HEK293 (cell line): ENCODE measurements at regions of chr12 and their contacts with region 1.

Region 1: GRCh38 chr12:104381731-104382480 is 74.8 kb upstream of the CHST11 start:
- H3K4me3 ChIP-seq: no peak overlapping the region
- H3K27ac ChIP-seq: no peak overlapping the region
- H3K4me1 ChIP-seq: no peaks in the 10 kb centered on the region
- CTCF ChIP-seq: peak; percentile 80

Region 2: GRCh38 chr12:104201238-104202001 is 180.5 kb before region 1 on chr12:
- CTCF ChIA-PET with region 1: interaction called, 12 read pairs
- POLR2A ChIA-PET with region 1: no interaction called
- H3K4me3 ChIP-seq: no peak overlapping the region
- H3K27ac ChIP-seq: no peak overlapping the region
- H3K4me1 ChIP-seq: no peaks in the 10 kb centered on the region
- CTCF ChIP-seq: peak; percentile 74

Region 3: DNA sequence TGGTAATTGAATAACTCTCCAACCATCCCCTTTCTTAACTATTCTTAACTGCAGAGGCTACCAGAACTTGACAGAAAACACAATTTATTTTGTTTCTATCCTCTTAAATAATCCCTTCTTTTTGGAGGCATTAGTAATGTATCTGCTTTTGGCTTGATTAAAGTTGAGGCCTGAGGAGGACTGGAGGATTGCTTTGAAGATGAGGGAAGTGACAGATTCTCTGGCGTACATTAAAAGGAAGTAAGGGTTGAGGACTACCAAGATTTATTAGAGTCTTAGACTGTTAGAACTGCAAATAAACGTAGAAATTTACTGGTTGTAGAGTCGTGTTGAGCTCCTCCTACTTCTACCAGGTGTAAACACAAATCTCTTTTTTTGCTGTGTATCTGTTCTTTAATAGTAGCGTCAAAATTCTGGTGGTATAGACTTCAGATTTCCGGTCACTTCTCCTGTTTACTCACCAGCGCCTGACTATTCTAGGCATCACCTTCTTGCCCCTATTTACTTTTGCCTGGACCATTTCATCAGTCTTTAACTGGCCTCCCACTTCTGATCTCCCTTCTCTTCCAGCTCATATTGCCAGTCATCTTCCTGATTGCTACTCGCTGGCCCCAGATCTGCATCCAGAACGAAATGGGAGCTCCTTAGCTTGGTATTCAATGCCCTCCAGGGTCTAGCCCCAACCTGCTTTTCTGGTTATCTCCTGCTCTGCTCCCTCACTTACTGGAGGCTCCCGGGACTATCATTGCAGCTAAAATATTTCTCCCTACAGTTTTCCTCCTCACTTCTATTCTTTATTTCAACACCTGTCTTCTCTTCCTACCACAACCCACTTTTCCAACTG is 86.8 kb before region 1 on chr12:
- CTCF ChIA-PET with region 1: no interaction called
- POLR2A ChIA-PET with region 1: no interaction called
- H3K4me3 ChIP-seq: no peak overlapping the region
- H3K27ac ChIP-seq: no peak overlapping the region
- H3K4me1 ChIP-seq: no peaks in the 10 kb centered on the region
- CTCF ChIP-seq: no peak

Region 4: DNA sequence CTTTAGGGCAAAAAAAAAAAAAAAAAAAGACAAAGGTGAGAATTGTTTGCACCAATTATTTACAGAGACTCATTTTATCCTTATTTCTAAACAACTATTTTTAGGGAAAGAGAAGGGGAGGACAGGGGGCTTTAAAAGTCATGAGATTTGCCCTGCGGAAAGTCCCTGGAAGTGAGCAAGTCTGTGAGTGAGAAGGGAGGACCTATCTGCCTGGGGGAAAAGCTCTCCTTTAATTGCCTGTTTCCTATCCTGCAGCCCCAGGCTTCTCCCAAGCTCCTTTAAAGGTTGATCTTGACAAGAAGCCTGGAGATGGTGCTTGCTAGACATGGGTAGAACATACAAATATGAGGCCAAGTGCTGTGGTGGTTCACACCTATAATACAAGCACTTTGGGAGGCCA is 66.5 kb after region 1 on chr12:
- CTCF ChIA-PET with region 1: interaction called, 11 read pairs
- POLR2A ChIA-PET with region 1: no interaction called
- H3K4me3 ChIP-seq: no peak overlapping the region
- H3K27ac ChIP-seq: no peak overlapping the region
- H3K4me1 ChIP-seq: no peaks in the 10 kb centered on the region
- CTCF ChIP-seq: no peak

Region 5: DNA sequence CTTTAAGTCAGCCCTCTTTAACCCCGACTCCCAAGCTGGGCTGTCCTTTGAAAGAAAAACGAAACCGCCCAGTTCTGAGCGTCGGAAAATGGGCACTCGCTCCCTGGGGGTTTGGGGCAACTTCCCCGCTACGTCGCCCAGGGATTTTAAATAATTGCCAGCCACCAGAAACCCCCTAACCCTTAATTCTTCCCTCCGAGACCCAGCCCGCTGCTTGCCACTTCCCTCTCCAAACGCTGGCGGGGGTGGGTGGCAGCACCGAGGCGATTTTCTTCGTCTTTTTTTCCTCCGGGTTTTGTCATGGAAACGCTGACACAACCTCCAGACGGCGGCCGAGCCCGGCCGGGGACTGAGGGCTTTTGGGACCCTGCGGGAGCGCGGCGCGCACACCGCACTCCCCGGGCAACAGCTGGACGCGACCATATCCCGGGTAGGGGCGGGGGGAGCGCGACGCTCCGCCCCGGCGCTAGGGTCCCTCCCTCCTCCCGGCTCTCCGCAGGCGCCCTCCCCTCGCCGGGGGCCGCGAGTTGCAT is 74.6 kb after region 1 on chr12 and contains the start of gene CHST11:
- CTCF ChIA-PET with region 1: interaction called, 33 read pairs
- POLR2A ChIA-PET with region 1: interaction called, 7 read pairs
- H3K4me3 ChIP-seq: peak within 1 kb of the TSS; percentile 83
- H3K27ac ChIP-seq: peak within 1 kb of the TSS; percentile 85
- H3K4me1 ChIP-seq: peaks cover 5% of the 10 kb centered on the region; the same call in 1 of the 2 replicates
- CTCF ChIP-seq: peak; percentile 74

Region 6: GRCh38 chr12:104870797-104871196 is 488.9 kb after region 1 on chr12:
- CTCF ChIA-PET with region 1: interaction called, 11 read pairs
- POLR2A ChIA-PET with region 1: no interaction called
- H3K4me3 ChIP-seq: no peak overlapping the region
- H3K27ac ChIP-seq: no peak overlapping the region
- H3K4me1 ChIP-seq: no peaks in the 10 kb centered on the region
- CTCF ChIP-seq: no peak

Region 7: DNA sequence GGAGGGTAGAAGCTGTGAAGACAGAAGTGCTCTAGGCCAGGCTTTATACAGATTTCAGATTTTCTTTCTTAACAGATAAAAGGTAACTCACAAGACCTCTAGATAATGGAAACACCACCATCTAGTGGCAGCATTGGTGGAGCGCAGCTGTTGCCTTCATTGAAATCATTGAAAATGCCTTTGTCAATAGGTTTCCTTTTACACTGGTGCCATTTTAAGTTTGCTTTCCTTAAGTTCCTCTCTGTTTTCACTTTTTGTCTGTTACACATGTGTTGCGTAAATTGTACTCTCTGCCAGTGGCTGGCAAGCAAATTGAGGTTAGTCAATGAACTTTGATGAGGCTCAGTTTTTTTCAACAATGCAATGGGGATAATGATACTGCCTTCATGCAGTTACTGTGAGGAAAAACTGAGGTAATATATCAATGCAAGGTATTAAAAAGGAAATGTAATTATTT is 671.2 kb after region 1 on chr12:
- CTCF ChIA-PET with region 1: interaction called, 40 read pairs
- POLR2A ChIA-PET with region 1: no interaction called
- H3K4me3 ChIP-seq: no peak overlapping the region
- H3K27ac ChIP-seq: no peak overlapping the region
- H3K4me1 ChIP-seq: no peaks in the 10 kb centered on the region
- CTCF ChIP-seq: peak; percentile 79